Heart left ventricle (tissue), 16 donors: ENCODE measurements at regions of chr20 and their contacts with region 1.

Region 1: DNA sequence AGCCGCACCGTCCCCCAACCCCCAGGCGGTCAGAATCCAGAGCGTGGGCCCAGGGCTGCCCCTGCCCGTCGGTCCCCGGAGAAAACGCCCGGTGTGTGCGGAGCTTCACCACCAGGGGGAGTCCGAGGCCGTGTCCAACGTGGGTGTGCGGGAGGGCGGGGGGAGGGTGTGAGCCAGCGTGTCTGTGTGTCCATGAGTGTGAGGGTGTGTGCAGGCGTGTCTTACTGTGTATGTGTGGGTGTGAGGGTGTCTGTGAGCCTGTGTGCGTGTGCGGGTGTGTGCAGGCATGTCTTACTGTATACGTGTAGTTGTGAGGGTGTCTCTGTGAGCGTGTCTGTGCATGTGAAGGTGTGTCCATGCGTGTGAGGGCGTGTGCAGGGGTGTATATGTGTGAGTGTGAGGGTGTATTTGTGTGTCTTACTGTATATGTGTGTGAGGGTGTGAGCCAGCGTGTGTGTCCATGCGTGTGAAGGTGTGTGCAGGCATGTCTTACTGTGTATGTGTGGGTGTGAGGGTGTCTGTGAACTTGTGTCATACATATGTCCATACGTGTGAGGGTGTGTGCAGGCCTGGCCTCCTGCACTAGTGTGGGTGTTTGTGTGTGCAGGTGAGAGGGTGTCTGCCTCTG is 24.6 kb upstream of the GATA5 start:
- DNase-seq: peak; percentile 77 to 91 (median 77)
- ATAC-seq: peak; percentile 56 to 82 (median 70)
- H3K4me3 ChIP-seq: no peak overlapping the region
- H3K27ac ChIP-seq: no peak overlapping the region
- H3K4me1 ChIP-seq: peaks cover 0 to 22% (median 11%) of the 10 kb centered on the region in 12 donors
- H3K27me3 ChIP-seq: peaks cover 0 to 14% (median 0%) of the 10 kb centered on the region in 9 donors
- CTCF ChIP-seq: peak; percentile 70 to 88 (median 80)
- POLR2A ChIP-seq: no peak

Region 2: DNA sequence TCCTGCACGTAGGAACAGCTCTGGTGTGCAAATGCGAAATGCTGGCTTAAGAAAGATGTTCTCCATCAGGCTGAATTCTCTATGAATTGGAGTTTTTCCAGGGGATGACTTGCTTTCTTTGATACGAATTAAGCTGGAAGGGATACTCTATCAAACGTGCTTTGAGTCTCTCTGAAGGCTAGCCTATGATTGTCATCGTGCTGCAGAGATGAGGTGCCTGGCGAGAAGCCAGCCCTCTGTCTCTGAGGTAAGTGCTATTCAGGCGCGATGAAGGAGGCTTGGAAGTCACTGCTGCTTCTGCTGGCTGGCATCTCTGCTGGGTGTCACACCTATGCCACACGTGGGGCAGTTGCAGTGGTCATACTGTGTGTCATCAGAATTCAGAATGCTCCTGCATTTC is 658.4 kb before region 1 on chr20:
- intact Hi-C with region 1: no loop called
- DNase-seq: no peak
- ATAC-seq: no peak
- H3K4me3 ChIP-seq: no peak overlapping the region
- H3K27ac ChIP-seq: no peak overlapping the region
- H3K4me1 ChIP-seq: no peaks in the 10 kb centered on the region
- H3K27me3 ChIP-seq: peaks cover 0 to 16% (median 0%) of the 10 kb centered on the region in 9 donors
- CTCF ChIP-seq: no peak
- POLR2A ChIP-seq: no peak

Region 3: DNA sequence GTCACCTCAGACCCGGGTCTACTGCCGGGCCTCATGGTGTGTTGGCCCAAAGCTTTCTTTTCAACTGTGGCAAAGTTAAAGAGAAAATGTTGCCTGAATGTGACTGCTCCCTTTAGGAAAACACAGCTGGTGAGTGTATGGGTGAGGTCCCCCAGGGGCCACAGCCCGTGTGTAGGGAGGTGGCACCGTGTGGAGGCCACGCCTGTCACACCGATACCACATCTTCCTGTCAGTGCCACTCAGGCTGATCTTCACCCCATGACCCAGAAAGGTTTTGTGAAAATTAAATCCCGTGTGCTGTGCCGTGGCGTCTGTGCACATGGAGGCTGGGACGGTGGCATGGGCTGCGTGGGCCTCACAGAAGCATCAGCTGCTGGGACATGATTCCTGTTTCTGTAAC is 208.2 kb before region 1 on chr20:
- intact Hi-C with region 1: loop called in 1 of 10 experiments (anchors 10 kb)
- DNase-seq: no peak
- ATAC-seq: peak in 1 of 4 donors; percentile 20
- H3K4me3 ChIP-seq: no peak overlapping the region
- H3K27ac ChIP-seq: no peak overlapping the region
- H3K4me1 ChIP-seq: peaks cover 0 to 8% (median 3%) of the 10 kb centered on the region in 12 donors
- H3K27me3 ChIP-seq: no peaks in the 10 kb centered on the region
- CTCF ChIP-seq: no peak
- POLR2A ChIP-seq: no peak

Region 4: DNA sequence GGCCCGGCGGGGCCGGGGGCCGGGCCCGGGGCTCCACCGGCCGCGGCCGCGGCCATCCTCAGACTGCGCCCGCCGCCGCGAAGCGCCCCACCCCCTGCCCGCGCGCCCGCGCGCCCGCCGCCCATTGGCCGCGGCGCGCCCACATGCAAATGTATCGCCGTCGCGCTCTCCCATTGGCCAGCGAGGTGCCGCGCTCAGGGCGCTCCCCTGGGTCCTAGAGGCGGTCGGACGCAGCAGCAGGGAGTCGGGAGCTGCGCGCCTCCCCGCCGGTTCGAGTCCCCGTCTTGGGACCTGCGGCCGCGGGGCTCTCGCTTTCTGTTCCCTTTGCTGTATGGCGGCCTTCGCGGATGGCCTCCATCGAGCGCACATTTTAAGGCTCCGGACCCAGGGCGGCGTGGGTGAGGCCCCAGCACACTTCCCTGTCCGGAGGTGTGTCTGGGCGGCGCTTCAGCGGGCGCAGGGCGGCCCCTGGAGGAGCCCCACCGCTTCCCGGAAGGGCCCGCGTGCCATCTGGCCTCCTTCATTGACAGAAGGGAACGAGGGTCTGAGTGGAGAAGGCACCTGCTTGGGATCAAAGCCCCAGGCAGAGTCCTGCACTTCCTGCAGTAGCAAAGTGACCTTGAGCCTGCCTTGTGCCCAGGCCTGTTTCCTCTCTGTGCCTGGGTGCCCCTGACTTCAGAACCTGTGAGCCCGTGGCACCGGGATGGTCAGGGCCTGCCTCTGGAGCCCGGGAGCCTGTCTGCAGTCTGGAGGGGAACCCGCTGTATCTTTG is 92.9 kb before region 1 on chr20 and contains the start of gene CABLES2:
- intact Hi-C with region 1: loop called in 7 of 10 experiments (anchors 2 to 10 kb)
- DNase-seq: peak; percentile 95 to 97 (median 97)
- ATAC-seq: peak; percentile 82 to 93 (median 90)
- H3K4me3 ChIP-seq: peak within 1 kb of the TSS; percentile 15 to 79 (median 64)
- H3K27ac ChIP-seq: peak within 1 kb of the TSS in 9 of 12 donors; percentile 35 to 80 (median 52)
- H3K4me1 ChIP-seq: peaks cover 0 to 33% (median 24%) of the 10 kb centered on the region in 12 donors
- H3K27me3 ChIP-seq: no peaks in the 10 kb centered on the region
- CTCF ChIP-seq: peak in 4 of 12 donors; percentile 4 to 35 (median 20)
- POLR2A ChIP-seq: peak in 1 of 2 donors; percentile 32
- total RNA-seq, gene CABLES2: 6.1 to 12.0 (median 8.8) TPM

Region 5: GRCh38 chr20:62611819-62612218 is 111.5 kb after region 1 on chr20:
- intact Hi-C with region 1: loop called in 9 of 10 experiments (anchors 1 to 5 kb)
- DNase-seq: peak in 1 of 5 donors; percentile 52
- ATAC-seq: no peak
- H3K4me3 ChIP-seq: no peak overlapping the region
- H3K27ac ChIP-seq: no peak overlapping the region
- H3K4me1 ChIP-seq: peaks cover 0 to 9% (median 6%) of the 10 kb centered on the region in 12 donors
- H3K27me3 ChIP-seq: peaks cover 0 to 6% (median 0%) of the 10 kb centered on the region in 9 donors
- CTCF ChIP-seq: no peak
- POLR2A ChIP-seq: no peak

Region 6: DNA sequence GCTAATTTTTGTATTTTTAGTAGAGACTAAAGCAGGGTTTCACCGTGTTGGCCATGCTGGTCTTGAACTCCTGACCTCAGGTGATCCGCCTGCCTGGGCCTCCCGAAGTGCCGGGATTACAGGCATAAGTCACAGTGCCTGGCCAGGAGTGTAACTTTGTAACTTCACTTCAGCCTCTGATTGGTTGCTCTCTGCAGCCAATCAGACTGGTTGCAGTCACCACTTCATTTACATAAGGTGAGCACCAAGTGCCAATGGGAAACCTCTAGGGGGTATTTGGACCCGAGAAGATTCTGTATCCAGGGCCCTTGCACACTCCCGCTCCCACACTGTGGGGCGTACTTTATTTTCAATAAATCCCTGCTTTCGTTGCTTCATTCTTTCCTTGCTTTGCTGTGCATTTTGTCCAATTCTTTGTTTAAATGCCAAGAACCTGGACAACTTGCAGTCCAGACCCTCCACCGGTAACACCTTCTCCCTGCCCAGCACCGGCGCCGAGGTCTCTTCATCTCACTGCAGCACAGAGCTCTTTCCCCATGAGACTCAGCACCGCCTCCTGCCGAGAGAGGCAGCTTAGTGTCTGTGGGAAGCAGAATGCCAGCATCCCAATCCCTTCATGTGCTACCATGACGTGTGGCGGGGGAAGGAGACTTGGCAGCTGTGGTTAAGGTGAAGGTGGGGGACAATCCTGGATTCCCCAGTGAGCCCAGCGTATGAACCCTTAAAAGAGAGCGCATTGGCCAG is 282.0 kb after region 1 on chr20:
- intact Hi-C with region 1: loop called in 1 of 10 experiments (anchors 10 kb)
- DNase-seq: no peak
- ATAC-seq: peak; percentile 21 to 50 (median 30)
- H3K4me3 ChIP-seq: no peak overlapping the region
- H3K27ac ChIP-seq: peak overlapping the region in 7 of 12 donors; percentile 12 to 71 (median 63)
- H3K4me1 ChIP-seq: peaks cover 0 to 19% (median 7%) of the 10 kb centered on the region in 12 donors
- H3K27me3 ChIP-seq: peaks cover 0 to 2% (median 0%) of the 10 kb centered on the region in 9 donors
- CTCF ChIP-seq: peak in 6 of 12 donors; percentile 7 to 25 (median 16)
- POLR2A ChIP-seq: no peak

Region 7: DNA sequence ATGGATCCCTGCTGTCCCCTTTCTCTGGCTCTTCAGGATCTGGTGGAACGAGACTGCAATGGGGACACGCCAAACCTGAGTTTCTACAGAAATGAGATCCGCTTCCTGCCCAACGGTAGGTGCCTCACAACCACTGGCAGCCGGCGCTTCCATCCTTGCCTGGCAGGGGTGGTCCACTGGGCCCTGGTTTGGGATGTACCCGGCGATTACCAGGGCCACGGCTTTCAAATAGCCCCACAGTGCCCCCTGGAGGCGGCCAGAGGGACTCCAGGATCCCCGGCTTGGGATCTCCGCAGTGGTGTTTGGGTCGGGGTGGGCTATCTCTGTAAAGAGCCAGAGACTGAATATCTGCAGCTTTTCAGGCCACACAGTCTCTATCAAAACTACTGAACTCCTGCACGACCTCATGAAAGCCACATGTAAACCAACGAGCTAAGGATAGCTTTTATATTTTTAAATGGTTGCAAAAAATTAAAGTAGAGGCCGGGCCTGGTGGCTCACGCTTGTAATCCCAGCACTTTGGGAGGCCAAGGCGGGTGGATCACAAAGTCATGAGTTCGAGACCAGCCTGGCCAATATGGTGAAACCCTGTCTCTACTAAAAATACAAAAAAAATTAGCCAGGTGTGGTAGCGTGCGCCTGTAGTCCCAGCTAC is 308.0 kb after region 1 on chr20:
- intact Hi-C with region 1: loop called in 2 of 10 experiments (anchors 5 kb)
- DNase-seq: peak; percentile 62 to 88 (median 67)
- ATAC-seq: peak; percentile 27 to 67 (median 46)
- H3K4me3 ChIP-seq: no peak overlapping the region
- H3K27ac ChIP-seq: no peak overlapping the region
- H3K4me1 ChIP-seq: peaks cover 0 to 44% (median 33%) of the 10 kb centered on the region in 12 donors
- H3K27me3 ChIP-seq: no peaks in the 10 kb centered on the region
- CTCF ChIP-seq: peak; percentile 91 to 96 (median 94)
- POLR2A ChIP-seq: no peak